ENCODE measurements at regions of chr2 and their contacts with region 1.

Region 1: GRCh38 chr2:164910101-164910899 is 45.0 kb downstream of the SLC38A11 start:
- DNase-seq: peak; percentile 36
- H3K4me3 Mint-ChIP-seq: no peak overlapping the region
- H3K27ac Mint-ChIP-seq: no peak overlapping the region
- H3K4me1 Mint-ChIP-seq: peaks cover 11% of the 10 kb centered on the region
- H3K27me3 Mint-ChIP-seq: peaks cover 2% of the 10 kb centered on the region

Region 2: GRCh38 chr2:164841719-164842623 is 68.3 kb before region 1 on chr2 and contains the start of gene COBLL1:
- intact Hi-C with region 1: loop called (anchors 5 kb)
- DNase-seq: peak; percentile 7
- H3K4me3 Mint-ChIP-seq: peak within 1 kb of the TSS; percentile 64
- H3K27ac Mint-ChIP-seq: no peak within 1 kb of the TSS
- H3K4me1 Mint-ChIP-seq: peaks cover 7% of the 10 kb centered on the region
- H3K27me3 Mint-ChIP-seq: peaks cover 56% of the 10 kb centered on the region
- total RNA-seq, gene COBLL1: not detected in 2 replicates

Region 3: DNA sequence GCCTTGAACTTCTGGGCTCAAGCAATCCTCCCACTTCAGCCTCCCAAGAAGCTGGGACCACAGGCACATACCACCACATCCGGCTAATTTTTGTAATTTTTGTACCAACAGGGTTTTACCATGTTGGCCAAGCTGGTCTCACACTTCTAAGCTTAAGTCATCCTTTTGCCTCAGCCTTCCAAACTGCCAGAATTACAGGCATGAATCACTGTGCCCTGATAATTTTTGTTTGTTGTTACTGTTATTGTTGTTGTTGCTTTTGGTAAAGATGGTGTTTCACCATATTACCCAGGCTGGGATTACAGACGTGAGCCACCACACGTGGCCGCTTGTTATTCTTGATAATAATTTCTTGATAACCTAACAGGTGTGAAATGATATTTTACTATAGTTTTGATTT is 58.2 kb before region 1 on chr2:
- intact Hi-C with region 1: no loop called
- DNase-seq: no peak
- H3K4me3 Mint-ChIP-seq: no peak overlapping the region
- H3K27ac Mint-ChIP-seq: no peak overlapping the region
- H3K4me1 Mint-ChIP-seq: no peaks in the 10 kb centered on the region
- H3K27me3 Mint-ChIP-seq: peaks cover 19% of the 10 kb centered on the region

Region 4: DNA sequence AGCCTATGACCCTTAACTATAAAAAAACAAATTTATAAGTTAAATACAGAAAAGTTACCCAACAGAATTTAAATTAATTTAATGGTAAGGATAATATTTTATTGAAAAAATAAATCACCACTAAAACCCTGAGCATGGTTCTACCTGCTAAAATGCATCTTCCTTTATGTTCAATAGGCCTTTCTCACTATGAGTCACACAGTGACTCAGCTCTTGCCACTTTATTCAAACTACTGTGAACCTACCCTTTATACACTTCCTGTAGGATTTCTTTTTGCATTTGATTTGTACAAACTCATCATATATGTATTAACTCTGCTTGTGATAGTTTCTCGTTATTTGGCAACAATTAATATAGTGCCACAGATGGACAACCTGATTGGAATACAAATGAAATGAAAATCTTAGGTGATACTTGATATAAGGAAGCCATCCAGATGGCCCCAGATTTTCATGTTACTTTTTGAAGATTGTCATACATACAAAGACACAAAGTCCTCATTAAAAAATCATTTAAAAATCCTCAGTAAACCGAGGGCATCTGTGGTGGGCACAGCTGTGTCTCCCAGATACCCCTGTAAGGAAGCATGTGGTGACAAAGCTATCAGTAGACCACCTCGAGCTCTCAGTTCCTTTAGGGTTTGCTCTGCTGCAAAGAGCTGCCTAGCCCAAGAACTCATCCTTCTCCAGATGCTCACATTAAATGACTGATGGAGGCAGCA is 13.5 kb before region 1 on chr2:
- intact Hi-C with region 1: loop called (anchors 1 kb)
- DNase-seq: no peak
- H3K4me3 Mint-ChIP-seq: no peak overlapping the region
- H3K27ac Mint-ChIP-seq: no peak overlapping the region
- H3K4me1 Mint-ChIP-seq: peaks cover 12% of the 10 kb centered on the region
- H3K27me3 Mint-ChIP-seq: peaks cover 17% of the 10 kb centered on the region

Region 5: DNA sequence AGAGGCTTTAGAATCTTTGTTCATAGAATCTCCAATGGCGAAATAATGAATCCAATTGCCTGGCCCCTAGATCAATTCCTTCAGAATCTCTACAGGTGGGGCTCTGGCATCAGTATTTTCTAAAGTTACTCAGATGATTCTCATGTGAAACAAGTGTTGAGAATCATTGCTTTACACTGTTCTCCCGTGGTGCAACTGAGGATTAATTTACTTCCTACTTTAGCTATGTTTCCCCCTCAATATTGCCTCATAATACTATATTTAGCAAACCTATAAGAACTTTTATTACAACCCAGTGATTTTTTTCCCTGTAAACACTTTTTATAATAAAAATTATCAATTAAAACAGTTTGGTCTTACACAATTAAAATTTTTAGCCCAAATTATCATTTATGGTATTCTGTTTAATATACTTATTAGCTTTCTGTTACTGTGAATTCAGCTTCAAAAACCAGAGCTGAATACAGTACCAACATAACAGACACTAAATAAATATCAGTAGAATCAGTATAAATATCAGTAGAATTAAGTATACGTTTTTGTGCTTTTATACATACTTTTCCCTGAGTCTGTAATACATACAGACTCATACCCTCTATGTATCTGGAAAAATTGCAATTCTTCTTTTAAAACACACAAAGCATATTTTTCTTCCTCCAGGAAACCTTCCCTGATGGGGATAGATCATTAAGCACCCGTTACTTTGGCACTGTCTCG is 24.3 kb after region 1 on chr2:
- intact Hi-C with region 1: no loop called
- DNase-seq: no peak
- H3K4me3 Mint-ChIP-seq: no peak overlapping the region
- H3K27ac Mint-ChIP-seq: no peak overlapping the region
- H3K4me1 Mint-ChIP-seq: no peaks in the 10 kb centered on the region
- H3K27me3 Mint-ChIP-seq: peaks cover 5% of the 10 kb centered on the region

Measured in activated T-helper 1 cell treated with anti-CD3 and anti-CD28 coated beads, Interleukin-12 subunit alpha, Interleukin-12 subunit beta, Interleukin-2, Interleukin-4 antibody, amounts not matched to agents 30 ng/mL and 10 ng/mL and 1 ng/mL, durations not matched to agents 14 hours and 24 hours and 36 hours (primary cell).